ENCODE measurements at regions of chr18 and their contacts with region 1.

Region 1: GRCh38 chr18:55763298-55763697 is 175.3 kb upstream of the TCF4 start:
- DNase-seq: no peak
- H3K4me3 ChIP-seq: no peak overlapping the region
- H3K4me1 ChIP-seq: no peaks in the 10 kb centered on the region
- H3K27me3 ChIP-seq: no peaks in the 10 kb centered on the region

Region 2: DNA sequence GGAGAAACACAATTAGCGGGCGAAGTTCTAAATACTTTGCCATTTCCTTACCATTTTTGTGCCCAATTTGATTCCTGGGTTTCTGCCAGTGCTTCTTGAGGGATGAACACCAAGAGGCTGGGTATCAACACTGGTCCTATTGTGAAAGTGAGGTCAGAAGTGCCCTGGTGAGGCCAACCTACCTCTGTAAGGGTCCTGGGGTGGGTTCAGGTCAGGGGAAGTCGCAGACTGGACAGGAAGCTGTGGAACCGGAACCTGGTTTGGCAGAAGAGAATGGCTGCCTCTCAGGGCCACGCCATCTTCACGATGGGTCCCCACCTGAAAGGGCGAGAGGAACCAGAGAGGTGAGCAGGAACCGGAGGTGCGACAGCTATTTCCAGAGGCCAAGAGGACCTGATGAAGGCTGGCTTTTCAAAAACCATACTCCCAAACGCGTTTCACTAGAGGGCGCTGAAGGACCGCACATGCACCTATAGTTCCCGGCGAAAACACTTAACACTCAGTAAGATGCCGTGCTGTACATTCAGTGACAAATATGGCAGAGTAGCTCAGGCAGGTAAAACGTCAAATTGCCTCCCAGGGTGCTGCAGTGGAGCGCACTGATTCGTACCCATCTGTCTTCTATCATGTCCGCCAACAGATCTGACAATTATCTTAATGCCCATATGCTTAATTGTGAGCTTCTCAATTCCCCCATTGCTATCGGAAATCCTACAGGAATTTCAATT is 528.8 kb before region 1 on chr18:
- in situ Hi-C with region 1: loop called (anchors 25 kb)
- DNase-seq: peak; percentile 81 to 85
- H3K4me3 ChIP-seq: no peak overlapping the region
- H3K4me1 ChIP-seq: peaks cover 7% of the 10 kb centered on the region; the same call in 1 of the 2 replicates
- H3K27me3 ChIP-seq: no peaks in the 10 kb centered on the region